Activated CD4-positive, alpha-beta T cell treated with anti-CD3 and anti-CD28 coated beads for 36 hours (primary cell): ENCODE measurements at regions of chr2 and their contacts with region 1.

Region 1: DNA sequence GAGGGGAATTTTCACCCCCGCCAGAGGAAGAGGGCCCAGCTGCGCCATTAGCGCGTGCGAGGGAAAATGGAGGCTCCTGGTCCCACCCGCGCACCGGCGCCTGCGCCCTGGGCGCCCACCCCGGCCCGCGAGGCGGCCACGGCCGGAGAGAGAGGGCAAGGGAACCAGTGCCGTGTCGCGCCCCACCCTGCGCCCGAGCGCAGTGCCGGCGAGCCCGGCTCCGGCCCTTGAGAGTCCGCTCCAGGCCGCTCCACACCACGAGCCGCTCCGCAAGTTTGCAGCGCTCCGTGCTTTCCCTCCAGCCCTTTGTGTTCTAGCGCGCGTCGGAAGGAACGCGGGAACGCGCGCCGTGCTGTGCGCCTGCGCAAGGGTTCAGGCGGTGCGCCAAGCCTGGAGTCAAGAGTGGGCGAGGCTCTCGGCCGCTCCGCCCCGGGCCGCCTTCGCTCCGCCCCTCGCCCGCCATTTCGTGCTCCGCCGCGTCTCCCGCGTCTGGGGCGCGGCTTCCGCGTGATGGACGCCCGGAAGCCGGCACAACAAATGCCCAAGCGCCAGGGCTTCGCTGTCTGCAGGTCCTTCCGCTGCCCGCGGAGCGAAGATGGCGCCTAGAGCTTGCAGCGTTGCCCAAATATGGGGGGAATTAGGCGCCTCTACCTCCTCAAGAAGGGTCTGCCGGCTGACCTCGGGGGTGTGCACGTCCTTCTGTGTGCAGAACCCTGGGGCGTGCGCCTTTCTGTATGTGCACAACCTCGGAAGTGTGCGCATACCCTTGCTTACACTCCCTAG is 46.1 kb upstream of the PTMA start:
- DNase-seq: peak; percentile 98
- ATAC-seq: peak; percentile 92
- H3K4me3 Mint-ChIP-seq: peak overlapping the region; percentile 72
- H3K27ac Mint-ChIP-seq: peak overlapping the region; percentile 96
- H3K4me1 Mint-ChIP-seq: peaks cover 23% of the 10 kb centered on the region
- H3K27me3 Mint-ChIP-seq: no peaks in the 10 kb centered on the region

Region 2: GRCh38 chr2:231191896-231192872 is 470.0 kb before region 1 on chr2:
- CTCF ChIA-PET with region 1: no interaction called
- POLR2A ChIA-PET with region 1: no interaction called
- intact Hi-C with region 1: no loop called
- DNase-seq: no peak
- ATAC-seq: no peak
- H3K4me3 Mint-ChIP-seq: no peak overlapping the region
- H3K27ac Mint-ChIP-seq: no peak overlapping the region
- H3K4me1 Mint-ChIP-seq: no peaks in the 10 kb centered on the region
- H3K27me3 Mint-ChIP-seq: peaks cover 14% of the 10 kb centered on the region

Region 3: GRCh38 chr2:231642631-231643494 is 19.4 kb before region 1 on chr2:
- CTCF ChIA-PET with region 1: interaction called, 3 read pairs
- POLR2A ChIA-PET with region 1: no interaction called
- intact Hi-C with region 1: loop called in 1 of 2 experiments (anchors 1 kb)
- DNase-seq: peak; percentile 85
- ATAC-seq: peak; percentile 93
- H3K4me3 Mint-ChIP-seq: peak overlapping the region; percentile 65
- H3K27ac Mint-ChIP-seq: peak overlapping the region; percentile 88
- H3K4me1 Mint-ChIP-seq: peaks cover 13% of the 10 kb centered on the region
- H3K27me3 Mint-ChIP-seq: no peaks in the 10 kb centered on the region

Region 4: DNA sequence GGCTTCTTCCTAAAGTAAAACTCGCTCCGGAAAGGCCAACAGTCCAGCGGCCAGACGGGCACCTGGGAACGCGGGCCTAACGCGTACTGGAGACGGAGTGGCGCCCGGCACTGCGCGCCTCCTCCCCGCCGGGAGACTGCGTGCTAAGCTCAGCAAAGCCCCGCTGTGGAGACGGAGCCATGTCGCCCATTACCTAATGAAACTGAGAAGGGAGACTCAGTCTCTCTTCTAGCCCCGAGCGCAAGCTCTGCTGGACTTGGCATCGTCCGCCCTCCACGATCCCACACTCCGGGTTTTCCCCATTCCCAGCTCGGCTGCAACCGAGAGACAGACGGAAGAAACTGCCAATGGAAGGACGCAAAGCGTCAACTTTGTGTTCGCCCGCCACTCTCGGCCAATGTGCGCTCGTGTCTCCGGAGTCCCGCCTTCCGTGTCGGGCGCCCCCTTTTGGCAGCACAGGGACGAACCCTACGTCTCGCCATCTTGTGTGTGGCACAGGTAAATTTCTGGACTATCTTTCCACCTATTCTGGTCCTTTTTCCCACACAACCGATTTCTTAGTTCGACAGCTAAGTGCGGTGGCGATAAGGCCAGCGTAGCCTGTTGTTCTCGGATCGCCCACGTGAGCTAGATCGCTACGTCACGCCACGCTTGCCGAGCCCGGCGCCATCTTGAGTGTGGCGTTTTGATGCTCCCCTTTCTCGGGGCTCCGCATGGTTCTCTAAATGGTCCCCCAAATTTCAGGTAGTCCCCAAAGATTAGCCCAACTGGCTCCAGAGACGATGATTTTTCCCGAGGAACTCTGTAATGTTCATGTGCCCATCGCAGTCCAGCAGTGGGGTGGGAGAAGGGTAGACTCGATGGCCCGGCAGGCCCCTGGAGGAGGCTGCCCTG is 44.8 kb after region 1 on chr2:
- CTCF ChIA-PET with region 1: interaction called, 15 read pairs
- POLR2A ChIA-PET with region 1: interaction called, 6 read pairs
- intact Hi-C with region 1: loop called (anchors 1 kb)
- DNase-seq: peak; percentile 99
- ATAC-seq: peak; percentile 59
- H3K4me3 Mint-ChIP-seq: peak overlapping the region; percentile 85
- H3K27ac Mint-ChIP-seq: peak overlapping the region; percentile 100
- H3K4me1 Mint-ChIP-seq: peaks cover 15% of the 10 kb centered on the region
- H3K27me3 Mint-ChIP-seq: peaks cover 2% of the 10 kb centered on the region